GM12878 (cell line): ENCODE measurements at regions of chr22 and their contacts with region 1.

Region 1: DNA sequence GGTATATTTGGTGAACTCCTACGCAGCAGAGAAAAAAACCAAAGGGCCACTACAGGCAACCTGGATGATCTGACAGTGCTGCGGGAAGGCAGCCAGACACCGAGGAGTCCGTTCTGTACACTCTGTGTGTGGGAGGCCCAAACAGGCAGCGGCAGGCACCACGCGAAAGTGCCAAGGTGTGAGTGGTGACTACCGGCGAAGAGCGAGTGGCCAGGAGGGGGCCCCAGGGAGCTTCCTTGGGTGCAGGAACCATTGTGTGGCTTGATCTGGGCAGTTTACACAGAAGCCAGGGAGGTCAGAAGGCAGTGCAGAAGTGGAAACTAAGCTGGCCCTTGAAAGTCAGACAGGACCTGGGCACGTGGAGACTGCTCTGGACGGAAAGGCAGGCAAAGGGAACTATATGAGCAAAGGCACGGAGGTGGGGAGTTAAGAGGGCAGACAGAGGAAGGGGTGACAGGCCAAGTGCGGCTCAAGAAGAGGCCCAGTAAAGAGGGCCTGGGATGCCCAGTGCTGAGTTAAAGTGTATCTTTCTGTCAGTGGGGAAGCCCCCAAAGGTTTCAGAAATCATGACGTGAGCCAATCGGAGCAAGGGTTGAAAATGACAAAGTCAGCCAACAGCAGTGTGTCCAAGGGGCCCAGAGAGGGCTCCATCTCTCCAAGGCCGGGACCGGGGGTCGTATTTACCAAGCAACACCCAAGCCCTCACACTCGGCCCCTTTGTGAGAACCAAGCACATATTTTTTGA is 10.6 kb downstream of the TMEM184B start:
- DNase-seq: no peak
- ATAC-seq: peak; percentile 75
- H3K4me3 ChIP-seq: no peak overlapping the region
- H3K27ac ChIP-seq: 0 out of 2 replicates have a peak overlapping the region, but pooled peaks have one; percentile 22
- H3K4me1 ChIP-seq: peaks cover 36% of the 10 kb centered on the region
- H3K27me3 ChIP-seq: no peaks in the 10 kb centered on the region
- CTCF ChIP-seq: peak; percentile 59 to 77 (median 66)
- EP300 ChIP-seq: no peak
- POLR2A ChIP-seq: no peak
- RAD21 ChIP-seq: peak; percentile 52

Region 2: DNA sequence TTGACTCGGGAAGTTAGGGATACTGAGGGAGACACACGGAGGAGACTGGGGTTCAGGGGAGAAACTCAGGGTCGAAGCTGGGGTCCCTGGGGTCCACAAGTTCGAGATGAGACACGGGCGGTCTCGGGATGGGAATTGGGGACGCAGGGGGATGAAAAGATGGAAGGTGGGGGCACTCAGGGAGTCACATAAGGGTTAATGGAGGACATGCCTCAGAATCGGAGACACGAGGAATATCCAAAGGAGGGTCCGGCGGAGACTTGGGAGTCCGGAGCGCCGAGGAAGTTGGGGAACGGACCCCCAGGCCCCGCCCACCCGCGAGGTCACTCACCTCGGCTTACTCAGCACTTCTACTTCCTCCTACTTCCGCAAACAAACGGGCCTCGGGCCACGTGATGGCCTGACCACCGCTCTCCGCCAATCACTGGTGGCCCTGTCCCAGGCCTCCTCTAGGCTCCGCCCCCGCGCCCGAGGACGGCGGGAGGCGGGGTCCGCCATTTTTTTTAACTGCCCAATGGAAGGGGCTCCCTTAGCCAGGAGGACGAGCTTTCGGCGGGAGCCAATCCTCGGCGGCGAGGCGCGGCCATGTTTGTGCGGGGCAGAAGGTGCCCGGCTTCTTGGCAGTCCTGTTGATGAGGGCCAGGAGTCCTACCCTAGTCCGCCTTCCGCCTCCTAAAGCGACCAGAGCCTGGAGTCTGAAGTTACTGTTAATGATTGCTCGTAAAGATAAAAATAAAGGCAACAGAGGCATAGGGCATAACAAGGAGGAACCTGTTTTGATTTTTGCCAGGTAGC is 80.6 kb before region 1 on chr22 and contains the start of gene PLA2G6:
- CTCF ChIA-PET with region 1: interaction called, 4 read pairs
- POLR2A ChIA-PET with region 1: interaction called, 6 read pairs
- RAD21 ChIA-PET with region 1: interaction called, 9 read pairs
- SMC1A ChIA-PET with region 1: interaction called, 11 read pairs
- in situ Hi-C with region 1: no loop called
- intact Hi-C with region 1: no loop called
- DNase-seq: peak; percentile 95
- ATAC-seq: peak; percentile 85
- H3K4me3 ChIP-seq: peak within 1 kb of the TSS; percentile 89
- H3K27ac ChIP-seq: peak within 1 kb of the TSS; percentile 100
- H3K4me1 ChIP-seq: peaks cover 39% of the 10 kb centered on the region
- H3K27me3 ChIP-seq: no peaks in the 10 kb centered on the region
- CTCF ChIP-seq: no peak
- EP300 ChIP-seq: no peak
- POLR2A ChIP-seq: peak; percentile 49; the same call in 1 of the 2 replicates
- RAD21 ChIP-seq: no peak
- polyA plus RNA-seq, gene PLA2G6: 0.15 to 0.27 TPM

Region 3: GRCh38 chr22:38240734-38241252 is 21.4 kb before region 1 on chr22:
- CTCF ChIA-PET with region 1: no interaction called
- POLR2A ChIA-PET with region 1: no interaction called
- RAD21 ChIA-PET with region 1: no interaction called
- SMC1A ChIA-PET with region 1: no interaction called
- in situ Hi-C with region 1: no loop called
- intact Hi-C with region 1: no loop called
- DNase-seq: no peak
- ATAC-seq: no peak
- H3K4me3 ChIP-seq: no peak overlapping the region
- H3K27ac ChIP-seq: no peak overlapping the region
- H3K4me1 ChIP-seq: peaks cover 12% of the 10 kb centered on the region
- H3K27me3 ChIP-seq: no peaks in the 10 kb centered on the region
- CTCF ChIP-seq: no peak
- EP300 ChIP-seq: no peak
- POLR2A ChIP-seq: no peak
- RAD21 ChIP-seq: no peak

Region 4: DNA sequence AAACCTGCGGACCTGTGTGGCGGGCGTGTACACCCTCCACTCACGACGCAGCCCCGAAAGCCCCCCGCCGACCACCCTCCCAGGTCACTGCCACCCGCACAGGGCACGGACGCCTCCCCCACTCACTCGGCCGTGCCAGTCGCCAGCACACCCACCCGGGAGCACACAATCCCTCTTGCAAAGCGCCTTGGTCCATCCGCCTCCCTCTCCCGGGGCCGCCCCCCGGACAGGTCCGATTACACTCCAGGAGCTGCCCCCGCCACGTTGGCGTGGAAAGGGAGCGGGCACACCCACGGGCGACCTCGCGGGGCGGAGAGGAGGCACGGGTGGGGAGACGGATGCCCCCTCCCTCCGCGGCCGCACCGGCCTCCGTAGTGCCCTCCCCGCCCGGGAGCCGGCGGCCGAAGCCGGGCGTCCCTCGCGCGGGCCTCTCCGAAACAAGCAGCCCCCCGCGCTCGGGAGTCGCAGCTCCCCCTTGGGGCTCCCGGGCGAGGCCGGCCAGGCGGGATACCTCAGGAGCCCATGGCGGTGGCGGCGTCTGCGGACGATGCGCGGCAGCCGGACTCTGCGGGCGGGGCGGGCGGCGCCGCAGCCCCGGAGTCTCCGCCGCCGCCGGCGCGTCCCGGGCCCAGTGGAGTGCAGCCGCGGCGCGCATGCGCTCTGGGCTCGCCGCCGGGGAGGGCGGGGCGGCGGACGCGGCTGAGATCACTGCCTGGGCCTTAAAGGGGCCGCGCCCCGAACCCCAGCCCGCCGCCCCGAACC is 10.3 kb after region 1 on chr22 and contains the start of gene TMEM184B:
- CTCF ChIA-PET with region 1: interaction called, 26 read pairs
- POLR2A ChIA-PET with region 1: interaction called, 4 read pairs
- RAD21 ChIA-PET with region 1: interaction called, 3 read pairs
- SMC1A ChIA-PET with region 1: interaction called, 4 read pairs
- in situ Hi-C with region 1: no loop called
- intact Hi-C with region 1: no loop called
- DNase-seq: no peak
- ATAC-seq: peak; percentile 95
- H3K4me3 ChIP-seq: peak within 1 kb of the TSS; percentile 90
- H3K27ac ChIP-seq: peak within 1 kb of the TSS; percentile 78
- H3K4me1 ChIP-seq: peaks cover 22% of the 10 kb centered on the region
- H3K27me3 ChIP-seq: no peaks in the 10 kb centered on the region
- CTCF ChIP-seq: no peak
- EP300 ChIP-seq: no peak
- POLR2A ChIP-seq: peak; percentile 75
- RAD21 ChIP-seq: no peak
- polyA plus RNA-seq, gene TMEM184B: 0.56 to 1.0 TPM

Region 5: GRCh38 chr22:38316364-38317121 is 54.3 kb after region 1 on chr22:
- CTCF ChIA-PET with region 1: interaction called, 10 read pairs
- POLR2A ChIA-PET with region 1: interaction called, 4 read pairs
- RAD21 ChIA-PET with region 1: interaction called, 3 read pairs
- SMC1A ChIA-PET with region 1: interaction called, 4 read pairs
- in situ Hi-C with region 1: no loop called
- intact Hi-C with region 1: loop called (anchors 5 kb)
- DNase-seq: no peak
- ATAC-seq: peak; percentile 39
- H3K4me3 ChIP-seq: peak overlapping the region; percentile 82
- H3K27ac ChIP-seq: peak overlapping the region; percentile 85
- H3K4me1 ChIP-seq: peaks cover 39% of the 10 kb centered on the region
- H3K27me3 ChIP-seq: no peaks in the 10 kb centered on the region
- CTCF ChIP-seq: no peak
- EP300 ChIP-seq: no peak
- POLR2A ChIP-seq: 0 out of 2 replicates have a peak, but pooled peaks have one; percentile 42
- RAD21 ChIP-seq: no peak